ENCODE measurements at regions of chr17 and their contacts with region 1.

Region 1: GRCh38 chr17:78112518-78113226 is 15.9 kb downstream of the TMC6 start:
- DNase-seq: peak; percentile 89
- ATAC-seq: peak; percentile 79
- H3K4me3 Mint-ChIP-seq: no peak overlapping the region
- H3K27ac Mint-ChIP-seq: peak overlapping the region; percentile 80
- H3K4me1 Mint-ChIP-seq: peaks cover 26% of the 10 kb centered on the region
- H3K27me3 Mint-ChIP-seq: no peaks in the 10 kb centered on the region
- CTCF ChIP-seq: peak; percentile 55

Region 2: GRCh38 chr17:77779711-77780539 is 332.7 kb before region 1 on chr17:
- CTCF ChIA-PET with region 1: no interaction called
- POLR2A ChIA-PET with region 1: no interaction called
- intact Hi-C with region 1: no loop called
- DNase-seq: no peak
- ATAC-seq: no peak
- H3K4me3 Mint-ChIP-seq: no peak overlapping the region
- H3K27ac Mint-ChIP-seq: no peak overlapping the region
- H3K4me1 Mint-ChIP-seq: peaks cover 4% of the 10 kb centered on the region
- H3K27me3 Mint-ChIP-seq: peaks cover 25% of the 10 kb centered on the region
- CTCF ChIP-seq: no peak

Region 3: GRCh38 chr17:78089576-78090281 is 22.9 kb before region 1 on chr17:
- CTCF ChIA-PET with region 1: interaction called, 5 read pairs
- POLR2A ChIA-PET with region 1: interaction called, 10 read pairs
- intact Hi-C with region 1: no loop called
- DNase-seq: no peak
- ATAC-seq: no peak
- H3K4me3 Mint-ChIP-seq: no peak overlapping the region
- H3K27ac Mint-ChIP-seq: no peak overlapping the region
- H3K4me1 Mint-ChIP-seq: no peaks in the 10 kb centered on the region
- H3K27me3 Mint-ChIP-seq: no peaks in the 10 kb centered on the region
- CTCF ChIP-seq: no peak

Region 4: GRCh38 chr17:78133971-78134898 is 21.6 kb after region 1 on chr17:
- CTCF ChIA-PET with region 1: interaction called, 21 read pairs
- POLR2A ChIA-PET with region 1: interaction called, 1,040 read pairs
- intact Hi-C with region 1: loop called (anchors 1 kb)
- DNase-seq: peak; percentile 59
- ATAC-seq: peak; percentile 15
- H3K4me3 Mint-ChIP-seq: peak overlapping the region; percentile 95
- H3K27ac Mint-ChIP-seq: peak overlapping the region; percentile 81
- H3K4me1 Mint-ChIP-seq: peaks cover 87% of the 10 kb centered on the region
- H3K27me3 Mint-ChIP-seq: no peaks in the 10 kb centered on the region
- CTCF ChIP-seq: peak; percentile 69

Region 5: DNA sequence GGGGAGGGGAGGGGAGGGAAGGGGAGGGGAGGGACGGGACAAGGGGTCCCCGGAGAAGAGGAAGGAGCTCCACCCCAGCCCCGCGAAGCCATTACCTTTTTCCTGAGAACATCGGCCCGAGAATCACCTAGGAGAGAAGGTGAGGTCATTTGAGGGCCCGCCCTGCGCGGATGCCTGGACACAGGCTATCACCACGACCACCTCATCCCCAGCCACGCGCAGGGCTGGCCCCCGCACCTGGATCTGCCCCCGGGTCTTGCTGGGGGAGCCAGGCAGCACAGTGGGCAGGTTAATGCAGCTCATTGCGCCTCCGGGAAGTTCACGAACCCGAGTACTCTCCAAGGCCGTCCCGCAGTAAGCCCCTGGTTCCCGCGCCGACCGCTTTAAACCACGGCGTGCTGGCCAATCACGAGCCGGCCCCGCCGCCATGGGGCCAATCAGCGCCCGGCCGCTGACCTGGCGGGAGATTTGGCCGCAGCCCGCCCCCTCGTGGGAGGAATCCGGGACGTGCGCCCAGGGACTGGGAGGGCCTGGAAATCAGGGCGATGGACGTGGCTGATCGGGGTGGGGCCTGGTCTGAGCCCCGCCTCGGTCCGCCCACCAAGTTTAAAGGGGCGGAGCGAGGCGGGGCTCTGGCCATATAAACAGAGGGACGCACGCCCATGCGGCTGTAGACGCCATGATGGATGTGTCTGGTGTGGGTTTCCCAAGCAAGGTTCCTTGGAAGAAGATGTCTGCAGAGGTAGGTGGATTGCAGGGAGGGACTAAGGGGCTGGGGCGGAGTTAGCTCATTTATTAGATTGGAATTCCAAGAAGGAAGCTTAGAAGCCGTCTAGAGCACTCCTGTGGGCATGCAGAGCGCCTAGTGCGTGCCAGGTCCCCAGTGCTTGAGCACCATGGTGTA is 74.3 kb after region 1 on chr17 and contains the starts of genes AFMID and TK1:
- CTCF ChIA-PET with region 1: interaction called, 3 read pairs
- POLR2A ChIA-PET with region 1: interaction called, 2,404 read pairs
- intact Hi-C with region 1: loop called (anchors 2 kb)
- DNase-seq: peak; percentile 83
- ATAC-seq: peak; percentile 96
- H3K4me3 Mint-ChIP-seq: peak within 1 kb of the TSS; percentile 85
- H3K27ac Mint-ChIP-seq: peak within 1 kb of the TSS; percentile 54
- H3K4me1 Mint-ChIP-seq: peaks cover 18% of the 10 kb centered on the region
- H3K27me3 Mint-ChIP-seq: no peaks in the 10 kb centered on the region
- CTCF ChIP-seq: no peak
- total RNA-seq, gene AFMID: 11.2 and 15.4 TPM in 2 replicates
- total RNA-seq, gene TK1: 3.8 TPM in 2 replicates

Region 6: DNA sequence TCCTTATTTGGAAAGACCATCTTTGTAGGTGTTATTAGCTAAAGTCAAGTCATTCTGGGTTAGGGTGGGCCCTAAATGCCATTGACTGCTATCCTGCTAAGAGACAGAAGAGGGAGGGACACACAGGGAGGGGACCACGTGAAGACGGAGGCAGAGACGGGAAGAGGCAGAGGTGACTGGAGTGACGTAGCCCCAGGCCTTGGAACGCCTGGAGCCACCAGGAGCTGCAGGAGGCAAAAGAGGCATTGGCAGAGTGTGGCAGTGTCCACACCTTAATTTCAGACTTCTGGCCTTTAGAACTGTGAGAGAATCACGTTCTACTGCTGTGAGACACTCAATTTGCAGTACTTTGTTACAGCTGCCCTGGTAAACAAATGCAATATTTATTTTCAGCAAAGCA is 87.8 kb after region 1 on chr17:
- CTCF ChIA-PET with region 1: no interaction called
- POLR2A ChIA-PET with region 1: no interaction called
- intact Hi-C with region 1: no loop called
- DNase-seq: no peak
- ATAC-seq: no peak
- H3K4me3 Mint-ChIP-seq: no peak overlapping the region
- H3K27ac Mint-ChIP-seq: no peak overlapping the region
- H3K4me1 Mint-ChIP-seq: peaks cover 8% of the 10 kb centered on the region
- H3K27me3 Mint-ChIP-seq: no peaks in the 10 kb centered on the region
- CTCF ChIP-seq: no peak

Region 7: GRCh38 chr17:78421484-78422266 is 309.0 kb after region 1 on chr17:
- CTCF ChIA-PET with region 1: interaction called, 5 read pairs
- POLR2A ChIA-PET with region 1: interaction called, 6 read pairs
- intact Hi-C with region 1: loop called (anchors 1 kb)
- DNase-seq: peak; percentile 73
- ATAC-seq: peak; percentile 98
- H3K4me3 Mint-ChIP-seq: no peak overlapping the region
- H3K27ac Mint-ChIP-seq: no peak overlapping the region
- H3K4me1 Mint-ChIP-seq: peaks cover 2% of the 10 kb centered on the region
- H3K27me3 Mint-ChIP-seq: no peaks in the 10 kb centered on the region
- CTCF ChIP-seq: peak; percentile 69